HEK293 (cell line): ENCODE measurements at regions of chr11 and their contacts with region 1.

Region 1: GRCh38 chr11:46238967-46239800 is 38.3 kb upstream of the CREB3L1 start:
- H3K4me3 ChIP-seq: peak overlapping the region; percentile 39
- H3K27ac ChIP-seq: no peak overlapping the region
- H3K4me1 ChIP-seq: peaks cover 2% of the 10 kb centered on the region; the same call in 1 of the 2 replicates
- CTCF ChIP-seq: peak; percentile 92

Region 2: GRCh38 chr11:46134540-46134939 is 104.6 kb before region 1 on chr11:
- CTCF ChIA-PET with region 1: interaction called, 10 read pairs
- POLR2A ChIA-PET with region 1: no interaction called
- H3K4me3 ChIP-seq: no peak overlapping the region
- H3K27ac ChIP-seq: no peak overlapping the region
- H3K4me1 ChIP-seq: no peaks in the 10 kb centered on the region
- CTCF ChIP-seq: no peak

Region 3: GRCh38 chr11:46295312-46296058 is 56.3 kb after region 1 on chr11:
- CTCF ChIA-PET with region 1: interaction called, 58 read pairs
- POLR2A ChIA-PET with region 1: interaction called, 28 read pairs
- H3K4me3 ChIP-seq: peak overlapping the region; percentile 44
- H3K27ac ChIP-seq: no peak overlapping the region
- H3K4me1 ChIP-seq: peaks cover 4% of the 10 kb centered on the region; the same call in 1 of the 2 replicates
- CTCF ChIP-seq: no peak

Region 4: DNA sequence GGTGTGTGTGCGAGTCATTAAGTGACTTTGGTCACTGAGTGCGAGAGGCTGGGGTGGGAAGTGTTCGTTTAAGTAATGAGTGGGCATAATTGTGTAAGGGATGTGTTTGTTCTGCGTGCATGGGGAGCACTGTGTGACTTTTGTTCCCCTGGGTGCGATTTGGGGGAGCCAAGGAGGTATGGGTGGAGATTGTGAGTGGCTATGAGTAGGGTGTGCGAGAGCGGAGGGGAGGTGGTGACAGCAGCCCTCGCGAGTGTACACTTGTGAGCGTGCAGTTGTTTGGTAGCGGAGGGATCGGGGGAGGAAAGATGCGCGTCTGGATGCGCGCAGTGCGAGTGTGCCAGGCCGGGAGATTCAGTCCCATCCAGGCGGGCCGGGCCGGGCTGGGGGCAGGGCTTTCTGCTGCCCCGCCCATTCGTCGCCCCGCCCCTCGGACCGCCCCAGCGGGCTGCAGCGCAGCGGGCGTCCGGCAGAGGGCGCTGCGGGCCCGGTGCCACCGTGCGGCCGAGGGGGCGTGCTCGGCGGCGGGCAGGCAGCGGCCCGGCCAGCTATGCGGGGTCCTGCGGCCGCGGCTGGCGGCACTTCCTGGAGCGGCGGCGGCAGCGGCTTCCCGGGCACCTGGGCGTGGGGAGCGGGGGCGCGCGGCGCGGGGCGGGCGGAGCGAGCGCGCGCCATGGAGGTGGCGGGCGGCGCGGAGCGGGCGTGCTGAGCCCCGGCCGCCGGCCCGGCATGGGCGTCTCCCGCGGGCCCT is 107.9 kb after region 1 on chr11 and contains the start of gene DGKZ:
- CTCF ChIA-PET with region 1: interaction called, 26 read pairs
- POLR2A ChIA-PET with region 1: interaction called, 3 read pairs
- H3K4me3 ChIP-seq: peak within 1 kb of the TSS; percentile 85
- H3K27ac ChIP-seq: peak within 1 kb of the TSS; percentile 64; the same call in 1 of the 2 replicates
- H3K4me1 ChIP-seq: no peaks in the 10 kb centered on the region; the same call in 1 of the 2 replicates
- CTCF ChIP-seq: no peak; the same call in 1 of the 2 replicates

Region 5: GRCh38 chr11:46361283-46362155 is 122.3 kb after region 1 on chr11:
- CTCF ChIA-PET with region 1: interaction called, 23 read pairs
- POLR2A ChIA-PET with region 1: interaction called, 4 read pairs
- H3K4me3 ChIP-seq: no peak overlapping the region
- H3K27ac ChIP-seq: no peak overlapping the region; the same call in 1 of the 2 replicates
- H3K4me1 ChIP-seq: peaks cover 9% of the 10 kb centered on the region
- CTCF ChIP-seq: no peak